AG04449 (cell line): ENCODE measurements at regions of chr2 and their contacts with region 1.

Region 1: GRCh38 chr2:102449370-102449974 is 23.6 kb upstream of the SLC9A4 start:
- DNase-seq: no peak
- H3K4me3 ChIP-seq: no peak overlapping the region
- CTCF ChIP-seq: peak; percentile 52

Region 2: DNA sequence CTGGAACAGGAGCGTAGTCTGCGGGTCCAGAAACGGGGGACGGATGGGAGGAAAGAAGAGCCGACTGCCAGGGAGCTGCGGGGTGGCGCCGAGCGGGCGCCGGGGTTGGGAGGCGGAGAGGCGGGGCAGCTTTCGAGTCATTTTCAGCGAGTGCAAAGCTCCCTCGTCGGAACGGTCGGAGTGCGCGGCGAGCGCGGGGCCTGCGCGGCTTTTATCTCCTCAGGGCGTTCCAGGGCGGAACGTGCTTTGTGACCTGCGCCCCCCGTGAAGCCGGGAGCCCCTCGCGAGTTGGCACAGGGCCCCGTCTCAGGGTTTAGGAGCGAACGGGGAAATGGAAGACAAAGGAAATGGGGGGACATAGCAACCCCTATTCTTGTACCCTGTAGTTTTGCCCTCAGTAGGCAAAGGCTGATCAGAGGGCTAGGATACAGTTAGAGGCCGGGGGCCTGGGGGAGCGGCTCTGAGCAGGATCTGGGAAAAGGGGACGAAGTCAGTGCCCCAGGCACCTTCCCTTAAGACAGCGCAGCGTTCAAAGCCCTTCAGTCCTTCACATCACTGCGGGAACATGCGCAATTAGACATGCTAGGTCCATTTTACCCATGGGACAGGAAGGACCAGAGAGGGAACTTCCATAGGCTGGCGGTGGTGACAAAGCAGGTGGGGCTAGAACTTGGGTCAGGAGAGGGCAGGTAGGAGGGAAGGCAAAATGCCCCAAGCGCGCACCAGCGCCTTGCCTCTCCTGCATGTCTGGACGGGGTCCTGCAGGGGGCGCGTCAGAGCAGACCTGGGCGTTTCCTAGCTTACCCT is 198.2 kb before region 1 on chr2:
- CTCF ChIA-PET with region 1: interaction called, 21 read pairs
- POLR2A ChIA-PET with region 1: no interaction called
- DNase-seq: no peak
- H3K4me3 ChIP-seq: peak overlapping the region; percentile 52
- CTCF ChIP-seq: peak; percentile 58

Region 3: GRCh38 chr2:102703748-102704147 is 254.3 kb after region 1 on chr2:
- CTCF ChIA-PET with region 1: no interaction called
- POLR2A ChIA-PET with region 1: no interaction called
- DNase-seq: no peak
- H3K4me3 ChIP-seq: no peak overlapping the region
- CTCF ChIP-seq: no peak